Pancreas (tissue), 10 donors: ENCODE measurements at regions of chr1 and their contacts with region 1.

Region 1: DNA sequence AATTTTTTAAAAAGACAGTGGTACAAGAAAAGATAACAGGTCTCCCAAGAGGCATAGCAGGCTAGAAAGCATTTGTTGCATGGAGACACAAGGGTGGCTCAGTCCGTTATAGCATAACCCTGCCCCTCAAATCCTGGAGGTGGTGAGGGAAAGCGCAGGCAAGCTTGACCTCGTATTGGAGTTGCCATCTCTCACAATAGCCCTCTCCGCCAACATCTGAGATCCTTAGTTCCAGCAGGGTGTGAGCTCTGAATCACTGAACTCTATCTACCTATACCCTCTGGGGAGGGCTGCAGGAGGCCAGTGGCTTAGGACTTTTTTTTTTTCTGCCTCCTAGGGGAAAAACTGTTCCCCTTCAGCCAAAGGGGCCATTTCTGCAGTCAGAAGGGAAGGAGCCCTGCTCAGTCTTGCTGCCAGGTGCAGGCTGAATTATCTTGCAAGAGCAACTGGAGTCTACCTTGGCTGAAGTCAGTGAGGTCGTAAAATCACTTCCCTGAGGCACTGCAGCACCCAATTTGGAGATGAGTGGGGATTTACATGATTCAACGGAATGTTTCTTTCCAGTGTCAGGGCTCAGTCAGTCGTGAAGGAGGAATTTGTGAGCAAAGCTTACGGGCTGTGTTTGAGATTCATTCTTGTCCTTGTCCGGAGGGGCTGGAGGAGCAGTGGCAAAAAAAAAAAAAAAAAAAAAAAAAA is 17.2 kb upstream of the C8A start:
- DNase-seq: no peak
- ATAC-seq: no peak
- H3K4me3 ChIP-seq: no peak overlapping the region
- H3K27ac ChIP-seq: no peak overlapping the region
- H3K4me1 ChIP-seq: no peaks in the 10 kb centered on the region
- H3K27me3 ChIP-seq: no peaks in the 10 kb centered on the region
- CTCF ChIP-seq: no peak

Region 2: GRCh38 chr1:57058652-57059501 is 221.5 kb after region 1 on chr1:
- intact Hi-C with region 1: loop called in 1 of 3 experiments (anchors 5 kb)
- DNase-seq: no peak
- ATAC-seq: no peak
- H3K4me3 ChIP-seq: no peak overlapping the region
- H3K27ac ChIP-seq: no peak overlapping the region
- H3K4me1 ChIP-seq: no peaks in the 10 kb centered on the region
- H3K27me3 ChIP-seq: no peaks in the 10 kb centered on the region
- CTCF ChIP-seq: no peak